Activated CD4-positive, alpha-beta memory T cell treated with anti-CD3 and anti-CD28 coated beads for 36 hours (primary cell): ENCODE measurements at regions of chr6 and their contacts with region 1.

Region 1: DNA sequence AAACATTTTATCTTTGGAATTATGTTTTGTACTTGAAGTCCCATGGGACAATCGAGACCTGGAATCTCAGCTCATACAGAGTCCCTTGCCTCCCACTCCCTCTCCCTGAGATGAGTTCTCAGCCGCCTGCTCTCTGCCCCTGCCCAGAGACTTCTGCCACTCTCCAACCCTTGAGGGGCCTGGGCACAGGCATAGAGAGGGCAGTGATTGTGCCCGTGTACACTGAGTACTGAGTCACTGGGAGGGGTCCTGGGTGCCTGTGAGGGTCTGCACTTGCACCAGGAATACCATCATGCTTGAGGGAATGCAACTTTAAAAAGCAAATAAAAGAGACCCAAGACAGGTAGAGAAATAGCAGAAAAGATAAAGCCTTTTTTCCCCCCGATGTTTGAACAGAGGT is 453.8 kb upstream of the HS3ST5 start:
- DNase-seq: no peak
- H3K4me3 Mint-ChIP-seq: no peak overlapping the region
- H3K27ac Mint-ChIP-seq: no peak overlapping the region
- H3K4me1 Mint-ChIP-seq: no peaks in the 10 kb centered on the region
- H3K27me3 Mint-ChIP-seq: no peaks in the 10 kb centered on the region

Region 2: GRCh38 chr6:114714836-114715507 is 81.6 kb before region 1 on chr6:
- CTCF ChIA-PET with region 1: no interaction called
- POLR2A ChIA-PET with region 1: no interaction called
- intact Hi-C with region 1: loop called (anchors 5 kb)
- DNase-seq: no peak
- H3K4me3 Mint-ChIP-seq: no peak overlapping the region
- H3K27ac Mint-ChIP-seq: no peak overlapping the region
- H3K4me1 Mint-ChIP-seq: no peaks in the 10 kb centered on the region
- H3K27me3 Mint-ChIP-seq: no peaks in the 10 kb centered on the region

Region 3: GRCh38 chr6:114863610-114864009 is 67.0 kb after region 1 on chr6:
- CTCF ChIA-PET with region 1: no interaction called
- POLR2A ChIA-PET with region 1: no interaction called
- intact Hi-C with region 1: no loop called
- DNase-seq: no peak
- H3K4me3 Mint-ChIP-seq: no peak overlapping the region
- H3K27ac Mint-ChIP-seq: no peak overlapping the region
- H3K4me1 Mint-ChIP-seq: no peaks in the 10 kb centered on the region
- H3K27me3 Mint-ChIP-seq: no peaks in the 10 kb centered on the region